IMR-90 (cell line): ENCODE measurements at regions of chr16 and their contacts with region 1.

Region 1: DNA sequence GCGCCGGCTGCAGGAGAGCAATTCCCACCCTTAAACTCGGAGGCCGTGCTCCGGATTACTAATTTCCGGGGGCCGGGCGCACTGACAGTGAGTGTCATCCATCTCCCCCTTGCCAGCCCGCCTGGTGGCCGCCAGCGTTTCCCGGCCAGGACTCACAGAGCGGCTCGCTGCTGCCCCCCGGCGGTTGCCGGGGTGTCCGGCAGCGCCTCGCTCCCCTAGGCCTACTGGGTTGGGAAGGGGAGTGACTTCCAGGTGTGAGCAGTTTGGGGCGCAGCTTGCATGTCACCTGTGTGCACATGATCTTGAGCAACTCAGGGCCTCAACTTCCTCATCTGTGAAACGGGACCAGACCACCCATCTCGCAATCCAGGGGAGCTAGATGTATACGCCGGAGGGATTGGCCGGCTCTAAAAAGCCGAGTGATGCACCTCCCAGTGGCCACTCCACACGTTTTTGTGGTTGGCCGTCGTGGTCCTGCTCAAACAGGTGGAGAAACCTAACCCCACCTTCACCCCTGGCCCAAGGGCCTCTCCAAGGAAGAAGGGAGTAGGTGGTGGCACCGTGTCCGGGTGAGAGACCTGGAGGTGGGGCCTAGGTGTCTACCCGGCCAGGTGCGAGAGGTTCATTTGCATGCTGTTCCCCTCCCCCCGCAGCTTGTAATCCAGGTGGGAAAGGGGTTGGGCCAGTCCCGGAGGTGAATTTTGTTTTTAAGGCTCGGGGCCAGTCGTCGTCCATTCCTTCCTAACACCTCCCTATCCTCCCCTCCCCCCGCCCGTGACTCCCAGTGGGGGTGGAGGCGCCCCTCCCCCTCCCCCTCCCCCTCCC is 2.4 kb upstream of the GSE1 start:
- DNase-seq: peak; percentile 81
- ATAC-seq: peak; percentile 52
- H3K4me3 ChIP-seq: no peak overlapping the region
- H3K27ac ChIP-seq: no peak overlapping the region; the same call in 1 of the 2 replicates
- H3K4me1 ChIP-seq: peaks cover 18% of the 10 kb centered on the region
- H3K27me3 ChIP-seq: no peaks in the 10 kb centered on the region
- CTCF ChIP-seq: peak; percentile 96
- POLR2A ChIP-seq: peak; percentile 57; the same call in 1 of the 2 replicates
- RAD21 ChIP-seq: peak; percentile 97

Region 2: GRCh38 chr16:85114909-85115567 is 495.7 kb before region 1 on chr16:
- CTCF ChIA-PET with region 1: no interaction called
- POLR2A ChIA-PET with region 1: no interaction called
- dilution Hi-C with region 1: no loop called
- in situ Hi-C with region 1: loop called (anchors 10 kb)
- intact Hi-C with region 1: loop called (anchors 1 kb)
- DNase-seq: peak; percentile 74
- ATAC-seq: peak; percentile 99
- H3K4me3 ChIP-seq: no peak overlapping the region
- H3K27ac ChIP-seq: peak overlapping the region; percentile 5; the same call in 1 of the 2 replicates
- H3K4me1 ChIP-seq: no peaks in the 10 kb centered on the region; the same call in 1 of the 2 replicates
- H3K27me3 ChIP-seq: no peaks in the 10 kb centered on the region
- CTCF ChIP-seq: peak; percentile 97
- POLR2A ChIP-seq: peak; percentile 51; the same call in 1 of the 2 replicates
- RAD21 ChIP-seq: peak; percentile 99

Region 3: DNA sequence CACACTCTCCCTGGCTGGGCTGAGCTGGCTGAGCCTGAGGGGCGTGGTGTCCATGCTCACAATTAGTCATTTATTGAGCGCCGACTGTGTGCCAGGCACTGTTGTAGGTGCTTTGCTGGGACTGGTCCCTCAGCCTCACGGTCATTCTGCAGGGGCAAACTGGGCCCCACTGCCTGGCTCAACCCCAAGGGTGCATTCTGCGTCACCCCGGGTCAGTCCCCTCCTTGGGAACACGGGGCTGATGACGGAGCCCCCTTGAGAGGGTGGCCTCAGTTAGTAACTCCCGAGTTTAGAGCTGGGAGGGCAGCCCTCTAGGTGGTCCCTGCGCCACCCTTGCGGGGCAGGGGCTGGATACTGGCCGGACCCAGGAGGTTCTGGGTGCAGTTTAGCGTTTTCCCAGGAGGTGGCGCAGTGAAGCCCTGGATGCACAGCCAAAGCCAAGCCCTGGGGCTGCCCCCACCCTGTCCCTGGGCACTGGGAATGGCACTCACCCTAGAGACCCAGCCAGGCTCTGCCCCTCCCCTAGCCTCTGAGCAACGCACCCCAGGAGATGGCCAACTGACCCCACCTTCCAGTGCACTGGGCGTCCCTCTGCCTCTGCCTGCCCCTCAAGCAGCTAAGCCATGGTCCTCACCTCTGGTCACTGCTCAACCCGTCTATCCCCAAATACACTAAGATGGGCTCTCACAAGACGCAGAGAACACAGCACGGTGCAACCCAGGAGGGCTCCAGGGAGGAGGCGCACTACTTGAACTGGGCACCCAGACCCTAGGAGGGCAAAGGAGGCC is 240.8 kb before region 1 on chr16:
- CTCF ChIA-PET with region 1: interaction called, 3 read pairs
- POLR2A ChIA-PET with region 1: no interaction called
- dilution Hi-C with region 1: no loop called
- in situ Hi-C with region 1: no loop called
- intact Hi-C with region 1: loop called (anchors 2 kb)
- DNase-seq: no peak
- ATAC-seq: peak; percentile 85
- H3K4me3 ChIP-seq: no peak overlapping the region
- H3K27ac ChIP-seq: no peak overlapping the region
- H3K4me1 ChIP-seq: peaks cover 24% of the 10 kb centered on the region
- H3K27me3 ChIP-seq: no peaks in the 10 kb centered on the region
- CTCF ChIP-seq: peak; percentile 70
- POLR2A ChIP-seq: no peak
- RAD21 ChIP-seq: peak; percentile 66

Region 4: DNA sequence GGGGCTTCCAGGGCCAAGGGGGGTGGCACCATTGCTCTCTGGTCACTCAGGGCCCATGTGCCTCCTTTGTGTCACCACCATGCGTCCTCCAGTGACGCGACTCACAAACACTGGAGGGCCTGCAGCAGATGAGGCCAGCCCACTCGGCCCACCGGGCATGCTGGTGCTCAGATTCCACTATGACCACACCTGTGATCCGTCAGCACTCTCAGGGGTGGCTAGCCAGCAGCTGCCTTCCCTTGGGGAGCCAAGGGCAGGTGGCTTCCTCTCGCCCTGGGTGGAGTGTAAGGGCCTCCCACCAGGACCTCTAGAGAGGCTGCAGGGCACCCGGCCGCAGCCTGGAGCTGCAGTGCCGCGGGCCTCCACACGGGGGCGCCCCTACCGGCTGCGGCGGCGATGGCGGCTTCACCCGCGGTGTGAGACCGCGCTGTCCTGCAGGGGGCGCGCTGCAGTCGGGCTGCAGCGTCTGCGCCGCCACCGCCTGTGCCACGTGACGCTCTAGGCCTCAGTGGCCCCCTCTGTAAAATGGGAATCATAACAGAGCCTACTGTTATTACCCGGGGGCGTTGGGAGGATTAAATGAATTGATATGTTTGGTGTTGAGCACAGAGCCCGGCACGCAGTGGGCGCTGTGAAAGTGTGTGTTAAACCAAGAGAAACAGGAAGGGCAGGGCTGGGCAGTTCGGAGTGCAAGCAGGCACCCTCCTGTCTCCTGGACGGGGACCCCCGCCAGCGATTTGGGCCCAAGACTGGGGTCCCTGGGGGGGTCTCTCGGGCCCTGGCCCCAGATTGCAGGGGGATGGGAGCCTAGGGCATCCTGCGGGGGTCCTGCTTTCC is 190.0 kb before region 1 on chr16:
- CTCF ChIA-PET with region 1: interaction called, 4 read pairs
- POLR2A ChIA-PET with region 1: interaction called, 3 read pairs
- dilution Hi-C with region 1: no loop called
- in situ Hi-C with region 1: no loop called
- intact Hi-C with region 1: loop called (anchors 1 kb)
- DNase-seq: peak; percentile 20
- ATAC-seq: peak; percentile 84
- H3K4me3 ChIP-seq: no peak overlapping the region
- H3K27ac ChIP-seq: no peak overlapping the region
- H3K4me1 ChIP-seq: no peaks in the 10 kb centered on the region; the same call in 1 of the 2 replicates
- H3K27me3 ChIP-seq: no peaks in the 10 kb centered on the region
- CTCF ChIP-seq: peak; percentile 99
- POLR2A ChIP-seq: no peak; the same call in 1 of the 2 replicates
- RAD21 ChIP-seq: peak; percentile 82

Region 5: DNA sequence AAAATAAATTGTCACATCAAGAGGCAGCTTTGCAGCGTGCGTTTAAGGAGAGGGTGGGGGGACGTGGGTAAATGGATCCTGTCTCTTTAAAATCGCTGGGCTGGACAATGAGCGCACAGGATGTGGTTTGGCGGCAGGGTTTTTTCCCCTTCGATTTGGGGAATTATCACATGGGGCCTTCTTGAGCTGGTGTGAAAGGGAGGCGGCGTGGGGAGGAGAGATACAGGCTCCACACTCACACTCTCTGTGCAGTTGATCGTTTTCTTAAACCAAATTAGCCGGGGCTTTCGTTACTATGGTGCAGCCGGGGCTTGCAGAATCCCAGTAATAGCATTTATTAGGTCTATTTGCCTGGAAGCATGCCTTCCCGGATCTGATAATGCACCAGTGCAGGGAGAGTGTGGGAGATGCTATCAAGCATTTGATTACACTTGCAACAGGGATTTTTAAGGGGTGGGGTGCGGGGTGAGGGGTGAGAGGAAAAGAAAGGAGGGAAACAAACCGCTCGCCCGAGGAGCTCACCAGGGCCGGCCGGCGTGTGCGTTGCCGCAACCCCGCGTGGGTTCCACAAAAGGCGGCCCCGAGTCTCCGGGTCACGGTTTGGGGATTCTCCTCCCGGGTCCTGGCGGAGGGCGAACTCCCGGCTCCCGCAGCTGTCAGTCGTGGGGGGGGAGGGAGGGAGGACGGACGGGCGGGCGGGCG is 56.5 kb before region 1 on chr16:
- CTCF ChIA-PET with region 1: interaction called, 6 read pairs
- POLR2A ChIA-PET with region 1: no interaction called
- dilution Hi-C with region 1: no loop called
- in situ Hi-C with region 1: no loop called
- intact Hi-C with region 1: loop called (anchors 1 kb)
- DNase-seq: peak; percentile 80
- ATAC-seq: peak; percentile 38
- H3K4me3 ChIP-seq: peak overlapping the region; percentile 93
- H3K27ac ChIP-seq: peak overlapping the region; percentile 75
- H3K4me1 ChIP-seq: peaks cover 10% of the 10 kb centered on the region
- H3K27me3 ChIP-seq: no peaks in the 10 kb centered on the region
- CTCF ChIP-seq: no peak
- POLR2A ChIP-seq: no peak
- RAD21 ChIP-seq: no peak